ENCODE measurements at regions of chr3 and their contacts with region 1.

Region 1: DNA sequence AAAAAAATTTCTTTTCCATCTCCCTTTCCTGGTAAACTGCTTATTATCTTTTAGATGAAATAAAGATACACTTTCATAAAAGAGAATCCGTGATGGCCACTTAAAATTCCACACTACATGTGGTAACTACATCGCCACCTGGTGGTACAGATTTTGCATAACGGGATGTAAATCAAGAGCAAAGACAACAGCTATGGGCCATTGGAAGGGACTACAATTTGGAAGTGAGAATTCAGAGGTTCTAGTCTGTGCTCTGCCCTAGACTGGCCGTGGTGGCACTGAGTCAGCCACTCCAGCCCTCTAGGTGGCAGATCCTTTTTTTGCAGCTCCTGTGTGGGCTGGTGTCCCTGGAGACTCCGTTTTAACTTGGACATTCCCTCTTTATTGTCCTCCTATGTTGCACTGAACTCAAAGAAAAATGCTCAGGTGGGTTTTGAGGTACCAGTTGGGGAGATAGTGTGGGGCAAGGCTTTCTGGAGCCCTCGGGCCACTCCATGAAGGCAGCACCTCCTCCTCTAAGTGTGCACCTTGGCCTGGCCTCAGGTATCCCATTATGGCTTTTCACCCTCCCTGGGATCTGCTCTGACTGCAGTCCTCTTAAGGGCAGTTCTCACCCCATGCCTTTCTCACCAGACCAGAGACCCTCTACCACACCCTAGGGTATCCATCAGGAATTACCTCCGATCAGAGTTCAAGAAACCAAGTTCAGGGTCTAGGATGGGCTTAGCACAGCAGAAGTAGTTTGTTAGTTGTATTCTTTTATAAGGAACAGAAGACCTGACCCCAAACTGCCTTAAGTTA is 54.9 kb downstream of the SPSB4 start:
- DNase-seq: peak; percentile 89
- H3K4me3 Mint-ChIP-seq: no peak overlapping the region
- H3K27ac Mint-ChIP-seq: no peak overlapping the region
- H3K4me1 Mint-ChIP-seq: no peaks in the 10 kb centered on the region
- H3K27me3 Mint-ChIP-seq: no peaks in the 10 kb centered on the region

Region 2: DNA sequence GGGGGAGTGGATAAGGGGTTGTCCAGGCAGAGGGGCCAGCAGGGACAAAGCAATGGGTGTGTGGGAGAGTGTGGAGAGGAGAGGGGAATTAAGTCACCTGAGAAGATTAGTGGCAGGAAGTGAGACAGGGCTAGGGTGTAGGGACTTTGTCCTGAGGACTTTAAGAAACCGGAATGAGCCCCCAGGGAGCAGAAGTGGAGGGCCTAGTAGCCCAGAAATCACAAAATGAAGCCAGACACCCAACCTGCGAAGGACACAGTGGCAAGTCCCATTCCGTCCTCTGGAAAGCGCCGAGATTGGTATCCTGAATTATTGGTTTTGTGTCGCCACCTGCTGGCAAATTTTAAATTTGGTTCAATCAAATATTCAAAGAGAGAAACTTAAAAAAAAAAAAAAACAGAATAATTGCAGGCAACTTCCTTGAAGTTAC is 242.4 kb before region 1 on chr3:
- intact Hi-C with region 1: no loop called
- DNase-seq: peak; percentile 85
- H3K4me3 Mint-ChIP-seq: no peak overlapping the region
- H3K27ac Mint-ChIP-seq: no peak overlapping the region
- H3K4me1 Mint-ChIP-seq: no peaks in the 10 kb centered on the region
- H3K27me3 Mint-ChIP-seq: peaks cover 4% of the 10 kb centered on the region

Region 3: GRCh38 chr3:140898340-140899180 is 207.5 kb before region 1 on chr3:
- intact Hi-C with region 1: loop called (anchors 1 kb)
- DNase-seq: peak; percentile 77
- H3K4me3 Mint-ChIP-seq: no peak overlapping the region
- H3K27ac Mint-ChIP-seq: no peak overlapping the region
- H3K4me1 Mint-ChIP-seq: peaks cover 3% of the 10 kb centered on the region
- H3K27me3 Mint-ChIP-seq: peaks cover 21% of the 10 kb centered on the region

Region 4: GRCh38 chr3:140972833-140973232 is 133.2 kb before region 1 on chr3:
- intact Hi-C with region 1: no loop called
- DNase-seq: no peak
- H3K4me3 Mint-ChIP-seq: no peak overlapping the region
- H3K27ac Mint-ChIP-seq: no peak overlapping the region
- H3K4me1 Mint-ChIP-seq: peaks cover 7% of the 10 kb centered on the region
- H3K27me3 Mint-ChIP-seq: no peaks in the 10 kb centered on the region

Region 5: GRCh38 chr3:141000027-141000663 is 105.9 kb before region 1 on chr3:
- intact Hi-C with region 1: loop called (anchors 1 kb)
- DNase-seq: peak; percentile 84
- H3K4me3 Mint-ChIP-seq: no peak overlapping the region
- H3K27ac Mint-ChIP-seq: no peak overlapping the region
- H3K4me1 Mint-ChIP-seq: peaks cover 5% of the 10 kb centered on the region
- H3K27me3 Mint-ChIP-seq: peaks cover 13% of the 10 kb centered on the region

Region 6: DNA sequence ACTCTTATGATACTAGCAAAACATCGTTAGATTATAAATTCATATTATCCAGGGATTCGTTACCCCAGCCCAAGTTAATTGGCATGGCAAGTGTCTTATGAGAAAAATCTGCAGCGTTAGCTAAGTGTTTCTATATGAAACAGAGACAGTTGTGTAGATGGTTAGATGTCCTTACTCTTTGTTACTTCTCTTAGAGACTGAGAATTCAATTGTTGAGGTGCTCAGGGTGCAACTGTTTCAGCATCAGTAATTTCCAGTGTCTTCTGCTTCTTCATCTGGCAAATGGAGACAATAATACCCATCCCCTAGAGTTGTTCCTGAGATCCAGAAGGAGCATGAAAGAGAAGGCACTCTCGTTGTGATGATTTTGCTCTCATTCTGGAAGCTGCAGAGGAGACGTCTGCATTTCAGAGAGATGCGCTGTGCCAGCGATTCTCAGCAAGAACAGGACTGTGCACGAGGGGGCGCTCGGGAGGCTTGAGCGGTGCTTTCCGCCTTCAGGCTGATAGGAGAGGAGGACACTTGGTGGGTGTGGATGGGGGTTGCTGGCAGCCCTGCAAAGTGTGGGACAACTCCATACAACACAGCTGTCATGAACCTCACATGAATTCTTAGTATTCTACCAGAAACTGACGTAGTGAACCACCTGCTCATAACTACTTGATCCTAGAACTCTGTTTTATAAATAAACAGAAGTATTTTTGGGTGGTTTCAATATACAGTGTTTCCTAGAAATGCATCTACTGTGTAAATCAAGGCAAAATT is 94.6 kb before region 1 on chr3:
- intact Hi-C with region 1: loop called (anchors 1 kb)
- DNase-seq: peak; percentile 94
- H3K4me3 Mint-ChIP-seq: no peak overlapping the region
- H3K27ac Mint-ChIP-seq: no peak overlapping the region
- H3K4me1 Mint-ChIP-seq: peaks cover 6% of the 10 kb centered on the region
- H3K27me3 Mint-ChIP-seq: peaks cover 35% of the 10 kb centered on the region

Measured in activated CD4-positive, alpha-beta T cell treated with anti-CD3 and anti-CD28 coated beads, Interleukin-2, amount 10 ng/mL, durations not matched to agents 24 days and 14 days (primary cell).